ENCODE measurements at regions of chr16 and their contacts with region 1.

Region 1: DNA sequence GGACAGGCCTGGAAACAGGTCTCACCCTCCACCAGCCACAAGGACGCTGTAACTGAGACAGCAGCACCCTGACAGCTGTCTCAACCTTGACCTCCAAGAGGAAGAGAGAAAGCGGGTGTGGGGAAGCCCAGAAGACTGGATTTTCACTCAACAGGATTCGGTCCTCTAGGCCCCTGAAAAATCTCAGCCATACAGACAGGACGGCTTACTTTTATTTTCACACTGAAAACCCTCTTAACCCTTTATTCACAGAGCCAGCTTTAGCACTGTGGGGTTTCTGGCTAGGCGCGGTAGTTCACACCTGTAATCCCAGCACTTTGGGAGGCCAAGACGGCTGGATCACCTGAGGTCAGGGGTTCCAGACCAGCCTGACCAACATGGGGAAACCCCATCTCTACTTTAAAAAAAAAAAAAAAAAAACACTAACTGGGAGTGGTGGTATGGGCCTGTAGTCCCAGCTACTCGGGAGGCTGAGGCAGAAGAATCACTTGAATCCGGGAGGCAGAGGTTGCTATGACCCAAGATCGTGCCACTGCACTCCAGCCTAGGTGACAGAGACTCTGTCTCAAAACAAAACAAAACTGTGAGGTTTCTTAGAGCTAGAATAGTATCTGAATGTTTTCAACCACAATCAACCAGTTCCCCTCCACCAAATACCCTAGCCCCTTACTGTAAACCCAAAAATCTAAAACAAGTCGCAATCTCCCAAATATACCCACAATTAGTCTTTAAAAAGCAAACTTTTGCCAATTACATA is 5.3 kb downstream of the ANKRD11 start:
- DNase-seq: peak; percentile 69
- ATAC-seq: no peak
- H3K4me3 ChIP-seq: no peak overlapping the region
- H3K4me3 Mint-ChIP-seq: peak overlapping the region; percentile 75
- H3K27ac ChIP-seq: peak overlapping the region; percentile 22 to 53
- H3K27ac Mint-ChIP-seq: peak overlapping the region; percentile 82
- H3K4me1 ChIP-seq: peaks cover 81 to 85% of the 10 kb centered on the region in 2 donors
- H3K4me1 Mint-ChIP-seq: peaks cover 81% of the 10 kb centered on the region
- H3K27me3 ChIP-seq: no peaks in the 10 kb centered on the region
- H3K27me3 Mint-ChIP-seq: no peaks in the 10 kb centered on the region
- CTCF ChIP-seq: no peak

Region 2: GRCh38 chr16:89436366-89436765 is 48.7 kb before region 1 on chr16:
- CTCF ChIA-PET with region 1: interaction called, 6 read pairs
- POLR2A ChIA-PET with region 1: interaction called, 3 read pairs
- intact Hi-C with region 1: loop called (anchors 5 kb)
- DNase-seq: no peak
- ATAC-seq: no peak
- H3K4me3 ChIP-seq: no peak overlapping the region
- H3K4me3 Mint-ChIP-seq: no peak overlapping the region
- H3K27ac ChIP-seq: no peak overlapping the region
- H3K27ac Mint-ChIP-seq: no peak overlapping the region
- H3K4me1 ChIP-seq: peaks cover 54 to 77% of the 10 kb centered on the region in 2 donors
- H3K4me1 Mint-ChIP-seq: peaks cover 65% of the 10 kb centered on the region
- H3K27me3 ChIP-seq: no peaks in the 10 kb centered on the region
- H3K27me3 Mint-ChIP-seq: no peaks in the 10 kb centered on the region
- CTCF ChIP-seq: no peak

Region 3: GRCh38 chr16:89460553-89460952 is 24.5 kb before region 1 on chr16:
- CTCF ChIA-PET with region 1: interaction called, 10 read pairs
- POLR2A ChIA-PET with region 1: interaction called, 3 read pairs
- intact Hi-C with region 1: loop called (anchors 2 kb)
- DNase-seq: peak; percentile 55
- ATAC-seq: peak; percentile 31
- H3K4me3 ChIP-seq: no peak overlapping the region
- H3K4me3 Mint-ChIP-seq: no peak overlapping the region
- H3K27ac ChIP-seq: no peak overlapping the region
- H3K27ac Mint-ChIP-seq: no peak overlapping the region
- H3K4me1 ChIP-seq: peaks cover 3 to 6% of the 10 kb centered on the region in 2 donors
- H3K4me1 Mint-ChIP-seq: peaks cover 39% of the 10 kb centered on the region
- H3K27me3 ChIP-seq: no peaks in the 10 kb centered on the region
- H3K27me3 Mint-ChIP-seq: no peaks in the 10 kb centered on the region
- CTCF ChIP-seq: no peak

Region 4: DNA sequence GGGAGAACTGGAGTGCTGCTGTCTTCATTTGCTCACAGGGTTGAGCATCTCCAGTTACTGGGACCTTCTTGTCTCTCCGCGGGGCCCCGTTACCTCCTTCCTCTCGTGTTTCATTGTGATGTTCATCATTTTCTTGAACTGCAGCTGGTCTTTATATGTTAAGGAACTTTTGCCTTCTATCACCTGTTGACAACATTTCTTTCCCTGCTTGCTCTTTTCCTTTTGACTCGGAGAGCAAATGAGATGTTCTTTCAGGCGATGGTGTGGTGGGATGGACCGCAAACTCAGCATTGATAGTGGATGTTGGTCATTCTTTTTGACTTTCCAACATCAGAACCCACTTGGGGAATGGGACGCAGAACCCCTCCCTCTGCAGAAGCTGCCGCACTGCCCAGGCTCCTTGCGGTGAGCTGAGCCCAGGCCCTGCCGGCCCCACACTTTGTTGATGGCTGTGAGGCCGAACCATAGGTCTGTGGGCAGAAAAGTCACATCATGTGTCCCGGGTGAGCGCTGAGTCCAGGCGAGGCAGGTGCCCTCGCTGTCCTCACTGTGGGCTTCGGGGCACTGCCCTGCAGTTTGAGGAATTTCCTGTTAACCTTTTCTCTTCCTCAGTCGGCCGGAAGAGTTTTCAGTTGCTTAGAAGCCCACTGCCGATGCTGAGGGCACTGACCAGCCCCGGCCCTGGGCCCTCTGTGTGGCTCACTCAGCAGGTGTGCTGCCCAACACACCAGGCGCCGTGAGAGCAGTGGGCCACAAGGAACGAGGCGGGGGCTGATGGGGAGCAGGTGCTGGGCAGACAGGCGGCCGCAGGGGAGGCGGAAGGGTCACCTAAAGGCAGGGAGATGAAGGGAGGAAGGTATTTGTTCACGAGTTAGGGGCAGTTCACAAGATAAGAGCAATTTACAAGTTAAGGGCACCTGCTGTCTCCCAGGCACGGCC is 82.8 kb after region 1 on chr16:
- CTCF ChIA-PET with region 1: no interaction called
- POLR2A ChIA-PET with region 1: no interaction called
- intact Hi-C with region 1: no loop called
- DNase-seq: no peak
- ATAC-seq: no peak
- H3K4me3 ChIP-seq: no peak overlapping the region
- H3K4me3 Mint-ChIP-seq: no peak overlapping the region
- H3K27ac ChIP-seq: no peak overlapping the region
- H3K27ac Mint-ChIP-seq: no peak overlapping the region
- H3K4me1 ChIP-seq: peaks cover 35 to 38% of the 10 kb centered on the region in 2 donors
- H3K4me1 Mint-ChIP-seq: peaks cover 42% of the 10 kb centered on the region
- H3K27me3 ChIP-seq: peaks cover 0 to 9% (median 0%) of the 10 kb centered on the region in 4 experiments
- H3K27me3 Mint-ChIP-seq: peaks cover 8% of the 10 kb centered on the region
- CTCF ChIP-seq: no peak

Region 5: DNA sequence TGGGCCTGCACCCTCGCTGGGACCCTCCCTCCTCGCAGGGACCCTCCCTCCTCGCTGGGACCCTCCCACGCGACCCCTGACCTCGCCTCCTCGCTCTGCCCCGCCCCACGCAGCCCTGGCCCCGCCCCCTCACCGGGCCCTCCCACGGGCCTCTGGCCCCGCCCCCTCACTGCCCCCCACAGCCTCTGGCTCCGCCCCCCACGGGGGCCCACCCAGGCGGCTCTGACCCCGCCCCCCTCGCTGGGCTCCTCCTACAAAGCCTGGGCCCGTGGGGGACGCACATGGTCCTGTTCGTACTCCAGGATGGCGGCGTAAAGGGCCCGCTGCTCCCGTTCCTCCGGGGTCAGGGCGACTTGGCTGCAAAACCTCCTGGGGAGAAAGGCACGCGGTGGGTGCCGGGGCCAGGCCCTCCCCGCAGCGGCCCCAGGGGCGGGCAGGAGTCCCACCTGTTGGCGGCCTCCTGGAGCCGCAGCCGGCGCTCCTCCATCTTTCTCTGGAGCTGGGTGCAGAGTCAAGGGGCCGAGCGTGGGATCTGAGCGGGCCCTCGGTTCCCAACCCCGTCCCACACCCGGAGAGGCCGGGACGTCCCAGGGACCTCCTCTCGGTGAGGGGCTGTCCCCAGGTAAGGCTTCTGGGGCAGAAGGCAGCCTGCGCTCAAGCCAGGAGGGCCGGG is 226.6 kb after region 1 on chr16:
- CTCF ChIA-PET with region 1: no interaction called
- POLR2A ChIA-PET with region 1: no interaction called
- intact Hi-C with region 1: no loop called
- DNase-seq: peak; percentile 82
- ATAC-seq: peak; percentile 95
- H3K4me3 ChIP-seq: peak overlapping the region in 4 of 5 experiments; percentile 35 to 67 (median 58)
- H3K4me3 Mint-ChIP-seq: peak overlapping the region; percentile 67
- H3K27ac ChIP-seq: no peak overlapping the region
- H3K27ac Mint-ChIP-seq: no peak overlapping the region
- H3K4me1 ChIP-seq: peaks cover 8 to 11% of the 10 kb centered on the region in 2 donors
- H3K4me1 Mint-ChIP-seq: peaks cover 4% of the 10 kb centered on the region
- H3K27me3 ChIP-seq: no peaks in the 10 kb centered on the region
- H3K27me3 Mint-ChIP-seq: no peaks in the 10 kb centered on the region
- CTCF ChIP-seq: no peak